Ovary (tissue), 10 donors: ENCODE measurements at regions of chr3 and their contacts with region 1.

Region 1: GRCh38 chr3:188097791-188098190 is 56.2 kb upstream of the LPP start:
- DNase-seq: no peak
- H3K4me3 ChIP-seq: no peak overlapping the region
- H3K27ac ChIP-seq: no peak overlapping the region
- H3K4me1 ChIP-seq: no peaks in the 10 kb centered on the region
- H3K27me3 ChIP-seq: no peaks in the 10 kb centered on the region
- CTCF ChIP-seq: no peak
- EP300 ChIP-seq: no peak
- POLR2A ChIP-seq: no peak

Region 2: GRCh38 chr3:187640569-187641059 is 457.2 kb before region 1 on chr3:
- intact Hi-C with region 1: no loop called
- DNase-seq: no peak
- H3K4me3 ChIP-seq: no peak overlapping the region
- H3K27ac ChIP-seq: no peak overlapping the region
- H3K4me1 ChIP-seq: no peaks in the 10 kb centered on the region
- H3K27me3 ChIP-seq: no peaks in the 10 kb centered on the region
- CTCF ChIP-seq: no peak
- EP300 ChIP-seq: no peak
- POLR2A ChIP-seq: no peak

Region 3: GRCh38 chr3:188111002-188111584 is 13.3 kb after region 1 on chr3:
- intact Hi-C with region 1: no loop called
- DNase-seq: no peak
- H3K4me3 ChIP-seq: no peak overlapping the region
- H3K27ac ChIP-seq: no peak overlapping the region
- H3K4me1 ChIP-seq: no peaks in the 10 kb centered on the region
- H3K27me3 ChIP-seq: no peaks in the 10 kb centered on the region
- CTCF ChIP-seq: no peak
- EP300 ChIP-seq: no peak
- POLR2A ChIP-seq: no peak

Region 4: DNA sequence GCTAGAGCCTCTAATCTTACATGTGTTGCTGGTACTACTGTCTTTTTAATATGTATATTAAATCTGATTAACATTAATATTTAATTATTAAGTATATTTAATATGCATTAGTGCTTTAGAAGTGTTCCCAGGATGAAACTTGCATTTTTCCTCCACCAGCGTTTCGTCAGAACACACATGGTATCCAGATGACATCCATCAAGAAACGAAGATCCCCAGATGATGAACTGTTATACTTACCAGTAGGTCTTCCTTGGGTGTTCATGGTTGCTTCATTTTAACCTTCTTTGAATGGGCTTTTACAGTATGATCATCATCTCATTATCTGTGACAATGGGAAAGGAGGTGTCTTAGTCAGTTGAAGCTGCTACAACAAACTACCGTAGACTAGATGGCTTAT is 1771.4 kb after region 1 on chr3:
- intact Hi-C with region 1: loop called in 1 of 4 experiments (anchors 5 kb)
- DNase-seq: no peak
- H3K4me3 ChIP-seq: no peak overlapping the region
- H3K27ac ChIP-seq: no peak overlapping the region
- H3K4me1 ChIP-seq: no peaks in the 10 kb centered on the region
- H3K27me3 ChIP-seq: no peaks in the 10 kb centered on the region
- CTCF ChIP-seq: no peak
- EP300 ChIP-seq: no peak
- POLR2A ChIP-seq: no peak